Activated CD8-positive, alpha-beta T cell treated with anti-CD3 and anti-CD28 coated beads, Interleukin-2, amount 10 ng/mL, durations not matched to agents 7 days and 5 days (primary cell): ENCODE measurements at regions of chr5 and their contacts with region 1.

Region 1: GRCh38 chr5:10627160-10627701 is 63.4 kb downstream of the ANKRD33B start:
- DNase-seq: no peak
- ATAC-seq: peak; percentile 40
- H3K4me3 Mint-ChIP-seq: peak overlapping the region; percentile 69
- H3K27ac Mint-ChIP-seq: peak overlapping the region; percentile 81
- H3K4me1 Mint-ChIP-seq: peaks cover 42% of the 10 kb centered on the region
- H3K27me3 Mint-ChIP-seq: no peaks in the 10 kb centered on the region

Region 2: DNA sequence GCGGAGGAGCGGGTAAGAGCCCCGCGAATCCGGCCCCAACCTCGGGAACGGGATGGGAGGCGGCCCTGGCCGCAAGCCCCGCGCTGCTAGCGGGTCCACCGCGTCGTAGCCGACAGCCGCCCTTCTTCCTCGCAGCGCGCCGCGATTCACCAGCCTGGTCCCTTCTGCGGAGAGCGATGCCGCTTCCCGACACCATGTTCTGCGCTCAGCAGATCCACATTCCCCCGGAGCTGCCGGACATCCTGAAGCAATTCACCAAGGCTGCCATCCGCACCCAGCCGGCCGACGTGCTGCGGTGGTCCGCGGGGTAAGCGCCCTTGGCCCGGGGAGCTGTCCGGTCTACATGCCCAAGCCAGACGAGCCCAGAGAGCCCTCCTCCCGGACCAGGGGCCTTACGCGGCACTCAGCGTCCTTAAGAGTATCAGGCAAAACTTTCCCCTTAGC is 185.2 kb before region 1 on chr5:
- CTCF ChIA-PET with region 1: interaction called, 13 read pairs
- POLR2A ChIA-PET with region 1: no interaction called
- DNase-seq: no peak
- ATAC-seq: peak; percentile 61
- H3K4me3 Mint-ChIP-seq: peak overlapping the region; percentile 81
- H3K27ac Mint-ChIP-seq: no peak overlapping the region
- H3K4me1 Mint-ChIP-seq: peaks cover 45% of the 10 kb centered on the region
- H3K27me3 Mint-ChIP-seq: peaks cover 6% of the 10 kb centered on the region

Region 3: GRCh38 chr5:10489810-10490426 is 137.3 kb before region 1 on chr5:
- CTCF ChIA-PET with region 1: interaction called, 22 read pairs
- POLR2A ChIA-PET with region 1: no interaction called
- DNase-seq: peak; percentile 49
- ATAC-seq: peak; percentile 67
- H3K4me3 Mint-ChIP-seq: peak overlapping the region; percentile 38
- H3K27ac Mint-ChIP-seq: peak overlapping the region; percentile 70
- H3K4me1 Mint-ChIP-seq: peaks cover 35% of the 10 kb centered on the region
- H3K27me3 Mint-ChIP-seq: peaks cover 3% of the 10 kb centered on the region

Region 4: DNA sequence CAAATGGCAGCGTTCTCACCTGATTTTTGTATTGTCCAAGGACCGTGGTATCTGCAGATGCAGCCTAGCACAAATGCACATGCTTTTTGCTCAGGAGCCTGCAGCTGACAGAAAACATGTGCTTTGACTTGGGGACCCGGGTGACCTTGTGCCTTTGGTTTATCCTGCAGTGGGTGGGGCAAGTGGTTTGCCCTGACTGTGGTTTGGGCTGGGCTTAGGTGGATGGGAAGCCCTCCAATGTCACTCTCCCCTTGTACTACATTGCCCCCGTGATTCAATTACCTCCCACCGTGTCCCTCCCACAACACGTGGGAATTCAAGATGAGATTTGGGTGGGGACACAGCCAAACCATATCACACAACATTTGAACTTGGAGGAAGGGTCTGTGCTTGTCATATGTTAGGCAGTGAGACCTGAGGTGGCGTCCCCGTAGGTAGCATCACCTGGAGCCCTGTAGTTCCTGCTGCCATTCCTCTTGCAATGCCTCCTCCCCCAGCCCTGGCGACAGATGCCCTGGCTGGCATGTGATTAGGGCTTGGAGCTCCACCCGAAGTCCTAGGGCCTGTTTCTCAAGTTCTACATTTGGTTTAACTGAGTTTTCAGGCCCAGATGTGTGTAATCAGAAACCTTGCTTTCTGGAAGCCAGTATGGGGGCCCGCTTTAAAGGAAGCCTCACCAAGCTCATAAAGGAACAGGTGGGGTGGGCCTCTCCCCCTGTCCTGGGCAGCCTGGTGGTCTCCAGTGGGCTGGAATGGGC is 61.3 kb before region 1 on chr5:
- CTCF ChIA-PET with region 1: interaction called, 19 read pairs
- POLR2A ChIA-PET with region 1: interaction called, 8 read pairs
- DNase-seq: peak; percentile 40
- ATAC-seq: no peak
- H3K4me3 Mint-ChIP-seq: peak overlapping the region; percentile 86
- H3K27ac Mint-ChIP-seq: no peak overlapping the region
- H3K4me1 Mint-ChIP-seq: peaks cover 26% of the 10 kb centered on the region
- H3K27me3 Mint-ChIP-seq: peaks cover 9% of the 10 kb centered on the region

Region 5: DNA sequence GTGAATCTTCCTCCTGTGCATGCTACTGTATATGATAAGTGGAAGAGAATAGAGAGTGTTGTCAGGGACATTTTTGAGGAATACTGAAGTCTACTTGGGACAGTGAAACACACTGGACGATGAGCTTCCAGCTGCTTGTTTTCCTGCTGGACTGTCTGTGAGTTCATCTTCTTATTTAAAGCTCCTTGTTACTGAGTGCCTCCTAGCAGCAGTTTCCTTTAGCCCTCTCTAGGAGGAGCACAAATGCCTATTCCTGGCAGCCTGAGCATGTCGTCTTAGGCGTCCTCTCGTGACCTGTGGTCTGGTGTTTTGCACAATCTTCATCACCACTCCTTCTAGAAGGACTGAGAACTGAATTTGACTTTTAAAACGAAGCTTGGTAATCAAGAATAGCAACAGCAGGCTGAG is 19.6 kb before region 1 on chr5:
- CTCF ChIA-PET with region 1: interaction called, 24 read pairs
- POLR2A ChIA-PET with region 1: no interaction called
- DNase-seq: no peak
- ATAC-seq: peak; percentile 55
- H3K4me3 Mint-ChIP-seq: peak overlapping the region; percentile 4
- H3K27ac Mint-ChIP-seq: no peak overlapping the region
- H3K4me1 Mint-ChIP-seq: peaks cover 12% of the 10 kb centered on the region
- H3K27me3 Mint-ChIP-seq: peaks cover 4% of the 10 kb centered on the region